Activated naive CD8-positive, alpha-beta T cell treated with anti-CD3 and anti-CD28 coated beads, Interleukin-2, amount 10 ng/mL, durations not matched to agents 7 days and 5 days (primary cell): ENCODE measurements at regions of chr12 and their contacts with region 1.

Region 1: GRCh38 chr12:12786716-12787601 is 1.5 kb downstream of the APOLD1 start:
- DNase-seq: peak; percentile 82
- ATAC-seq: peak; percentile 93
- H3K4me3 Mint-ChIP-seq: peak overlapping the region; percentile 82
- H3K27ac Mint-ChIP-seq: peak overlapping the region; percentile 83
- H3K4me1 Mint-ChIP-seq: peaks cover 33% of the 10 kb centered on the region
- H3K27me3 Mint-ChIP-seq: no peaks in the 10 kb centered on the region

Region 2: GRCh38 chr12:12661086-12661485 is 125.9 kb before region 1 on chr12:
- POLR2A ChIA-PET with region 1: no interaction called
- DNase-seq: no peak
- ATAC-seq: no peak
- H3K4me3 Mint-ChIP-seq: no peak overlapping the region
- H3K27ac Mint-ChIP-seq: no peak overlapping the region
- H3K4me1 Mint-ChIP-seq: peaks cover under 1% of the 10 kb centered on the region
- H3K27me3 Mint-ChIP-seq: no peaks in the 10 kb centered on the region

Region 3: DNA sequence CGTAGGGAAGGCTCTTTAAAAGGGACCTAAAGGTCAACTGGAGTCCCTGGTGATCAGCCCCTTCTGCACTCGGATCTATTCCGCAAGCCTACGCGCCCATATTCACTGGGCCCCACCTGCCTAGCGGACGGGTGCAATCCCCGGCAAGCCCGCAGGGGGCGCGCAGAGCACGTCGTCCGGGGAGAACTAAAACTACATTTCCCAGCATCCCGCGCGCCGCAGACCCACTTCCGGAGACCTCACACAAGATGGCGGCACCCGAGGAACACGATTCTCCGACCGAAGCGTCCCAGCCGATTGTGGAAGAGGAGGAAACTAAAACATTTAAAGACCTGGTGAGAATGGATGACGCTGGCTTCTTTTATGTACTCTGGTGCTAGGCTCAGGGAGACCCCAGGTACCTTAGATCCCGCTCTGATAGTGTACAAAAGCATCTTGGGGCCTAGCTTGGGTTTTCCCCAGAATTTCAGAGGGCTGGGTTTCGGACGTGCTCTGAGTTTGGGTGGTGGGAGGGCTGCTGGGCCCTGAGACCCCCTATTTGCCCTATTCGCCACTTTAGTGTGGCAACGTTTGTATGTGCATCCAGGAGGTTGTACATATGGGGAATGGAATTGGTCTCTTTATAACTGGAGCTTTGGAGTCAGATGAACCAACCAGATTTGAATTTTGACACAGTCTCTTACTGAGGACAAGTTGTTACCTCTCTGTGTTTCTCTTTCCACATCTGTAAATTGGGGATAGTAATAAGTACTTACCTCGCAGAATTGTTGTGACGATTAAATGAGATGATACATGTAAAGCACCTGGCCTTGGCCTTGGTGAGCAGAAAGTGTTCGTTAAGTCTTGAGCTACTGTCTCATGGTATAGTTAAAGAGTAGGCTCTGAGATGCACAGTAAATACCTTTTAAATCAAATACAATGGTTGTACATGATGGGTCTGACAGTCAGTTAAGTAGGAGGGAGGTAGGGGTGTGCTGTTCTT is 26.5 kb after region 1 on chr12 and contains the start of gene DDX47:
- POLR2A ChIA-PET with region 1: interaction called, 24 read pairs
- DNase-seq: peak; percentile 99
- ATAC-seq: peak; percentile 77
- H3K4me3 Mint-ChIP-seq: peak within 1 kb of the TSS; percentile 84
- H3K27ac Mint-ChIP-seq: peak within 1 kb of the TSS; percentile 84
- H3K4me1 Mint-ChIP-seq: peaks cover 59% of the 10 kb centered on the region
- H3K27me3 Mint-ChIP-seq: no peaks in the 10 kb centered on the region
- total RNA-seq, gene DDX47: 56.3 to 60.8 TPM